ENCODE measurements at regions of chr10 and their contacts with region 1.

Region 1: GRCh38 chr10:7260412-7260900 is 150.4 kb downstream of the SFMBT2 start:
- DNase-seq: no peak
- H3K4me3 Mint-ChIP-seq: peak overlapping the region; percentile 40
- H3K27ac Mint-ChIP-seq: peak overlapping the region; percentile 62
- H3K4me1 Mint-ChIP-seq: peaks cover 54% of the 10 kb centered on the region
- H3K27me3 Mint-ChIP-seq: no peaks in the 10 kb centered on the region

Region 2: GRCh38 chr10:6929148-6929830 is 331.2 kb before region 1 on chr10:
- intact Hi-C with region 1: loop called (anchors 5 kb)
- DNase-seq: no peak
- H3K4me3 Mint-ChIP-seq: no peak overlapping the region
- H3K27ac Mint-ChIP-seq: no peak overlapping the region
- H3K4me1 Mint-ChIP-seq: peaks cover 42% of the 10 kb centered on the region
- H3K27me3 Mint-ChIP-seq: peaks cover 6% of the 10 kb centered on the region

Region 3: DNA sequence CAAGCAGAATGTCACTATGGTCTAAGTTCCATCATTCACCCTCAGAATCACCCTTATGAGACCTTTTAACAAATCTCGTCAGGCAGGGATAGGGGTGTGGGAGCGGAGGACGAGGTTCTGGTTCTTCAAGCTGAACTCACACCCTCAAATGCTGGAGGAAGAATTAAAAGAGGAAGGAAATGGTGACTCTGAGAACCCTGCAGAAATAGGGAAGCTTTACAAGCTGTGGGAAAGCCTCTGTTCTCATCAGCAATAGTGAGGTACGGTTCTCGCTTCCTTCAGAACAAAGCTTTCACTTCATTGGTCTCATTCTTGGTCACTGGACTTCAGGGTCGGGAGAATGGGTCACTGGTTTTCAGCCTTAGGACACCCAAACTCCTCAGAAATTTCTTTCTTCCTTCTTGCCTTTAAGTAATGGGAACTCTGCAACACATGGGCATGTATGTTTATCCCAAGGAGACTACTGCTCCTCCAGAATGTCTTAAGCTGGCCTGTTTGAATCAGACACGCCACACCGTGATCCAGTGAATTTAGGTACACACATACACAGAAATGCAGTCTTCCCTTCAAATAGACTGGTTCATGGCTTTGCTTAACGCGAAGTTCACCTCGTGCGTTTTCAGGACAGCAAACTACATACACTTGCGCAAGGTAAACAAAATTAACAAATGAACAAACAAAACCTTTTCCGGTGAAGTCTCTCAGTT is 75.6 kb before region 1 on chr10:
- intact Hi-C with region 1: loop called (anchors 5 kb)
- DNase-seq: no peak
- H3K4me3 Mint-ChIP-seq: peak overlapping the region; percentile 47
- H3K27ac Mint-ChIP-seq: peak overlapping the region; percentile 87
- H3K4me1 Mint-ChIP-seq: peaks cover 58% of the 10 kb centered on the region
- H3K27me3 Mint-ChIP-seq: no peaks in the 10 kb centered on the region

Region 4: DNA sequence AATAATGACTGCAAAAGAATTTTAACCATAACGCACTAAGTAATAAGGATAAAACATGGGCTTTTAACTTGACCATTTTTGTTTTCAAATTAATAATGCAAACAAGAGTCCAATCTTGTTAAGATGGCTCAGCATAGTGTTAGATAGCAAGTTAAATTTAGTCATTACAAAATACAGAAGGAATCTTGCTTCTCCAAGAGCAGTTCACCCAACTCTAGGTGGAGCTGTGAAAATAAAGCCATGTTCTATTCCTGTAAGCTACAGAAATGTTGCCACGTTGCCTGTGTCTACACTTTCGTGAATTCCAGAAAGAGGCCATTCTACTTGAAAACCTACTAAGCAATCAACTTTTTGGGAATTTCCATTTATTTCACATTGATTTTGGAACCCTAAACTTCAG is 41.5 kb before region 1 on chr10:
- intact Hi-C with region 1: no loop called
- DNase-seq: no peak
- H3K4me3 Mint-ChIP-seq: no peak overlapping the region
- H3K27ac Mint-ChIP-seq: no peak overlapping the region
- H3K4me1 Mint-ChIP-seq: peaks cover 4% of the 10 kb centered on the region
- H3K27me3 Mint-ChIP-seq: no peaks in the 10 kb centered on the region

Measured in activated T-helper 2 cell treated with anti-CD3 and anti-CD28 coated beads, Interferon-gamma antibody, Interleukin-2, Interleukin-4, amounts not matched to agents 10 μg/mL and 5 μg/mL and 100 μg/mL, durations not matched to agents 14 hours and 24 hours and 36 hours (primary cell).